ENCODE measurements at regions of chr13 and their contacts with region 1.

Region 1: GRCh38 chr13:99269627-99270241 is 11.6 kb upstream of the GPR18 start:
- DNase-seq: no peak
- ATAC-seq: peak; percentile 73

Region 2: DNA sequence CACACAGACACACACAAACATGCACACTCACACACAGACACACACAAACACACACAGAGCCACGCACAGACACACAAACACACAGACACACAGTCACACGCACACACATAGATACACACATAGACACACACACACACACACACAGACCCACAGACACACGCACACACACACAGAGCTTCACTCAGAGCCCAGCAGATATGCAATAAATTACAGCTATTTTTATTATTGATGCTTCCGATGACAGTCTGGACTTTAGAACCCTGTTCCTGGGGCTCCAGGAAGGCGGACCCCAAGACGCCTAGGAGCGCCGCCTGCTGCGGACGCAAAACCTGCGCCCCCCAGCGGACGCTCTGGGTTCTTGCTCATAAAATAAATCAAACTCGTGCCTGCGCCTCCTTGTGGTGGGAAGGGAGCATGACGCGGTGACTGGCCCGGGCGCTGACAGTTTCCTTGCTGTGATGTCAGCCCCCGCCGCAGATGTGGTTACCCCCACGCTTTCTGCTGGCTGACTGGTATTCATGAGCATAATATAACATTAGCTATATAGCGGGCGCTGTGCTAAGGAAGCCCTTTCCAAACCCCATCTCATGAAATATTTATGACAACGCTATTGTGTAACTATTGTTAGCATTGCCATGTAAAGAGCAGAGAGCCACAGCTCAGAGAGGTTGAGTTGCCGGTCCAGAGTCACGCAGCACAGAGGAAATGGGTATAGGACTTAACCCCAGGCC is 167.1 kb after region 1 on chr13:
- intact Hi-C with region 1: loop called in 1 of 2 experiments (anchors 5 kb)
- DNase-seq: peak; percentile 66 to 92
- ATAC-seq: peak; percentile 81

Measured in left colon (tissue), 2 donors.